GM12878 (cell line): ENCODE measurements at regions of chr1 and their contacts with region 1.

Region 1: DNA sequence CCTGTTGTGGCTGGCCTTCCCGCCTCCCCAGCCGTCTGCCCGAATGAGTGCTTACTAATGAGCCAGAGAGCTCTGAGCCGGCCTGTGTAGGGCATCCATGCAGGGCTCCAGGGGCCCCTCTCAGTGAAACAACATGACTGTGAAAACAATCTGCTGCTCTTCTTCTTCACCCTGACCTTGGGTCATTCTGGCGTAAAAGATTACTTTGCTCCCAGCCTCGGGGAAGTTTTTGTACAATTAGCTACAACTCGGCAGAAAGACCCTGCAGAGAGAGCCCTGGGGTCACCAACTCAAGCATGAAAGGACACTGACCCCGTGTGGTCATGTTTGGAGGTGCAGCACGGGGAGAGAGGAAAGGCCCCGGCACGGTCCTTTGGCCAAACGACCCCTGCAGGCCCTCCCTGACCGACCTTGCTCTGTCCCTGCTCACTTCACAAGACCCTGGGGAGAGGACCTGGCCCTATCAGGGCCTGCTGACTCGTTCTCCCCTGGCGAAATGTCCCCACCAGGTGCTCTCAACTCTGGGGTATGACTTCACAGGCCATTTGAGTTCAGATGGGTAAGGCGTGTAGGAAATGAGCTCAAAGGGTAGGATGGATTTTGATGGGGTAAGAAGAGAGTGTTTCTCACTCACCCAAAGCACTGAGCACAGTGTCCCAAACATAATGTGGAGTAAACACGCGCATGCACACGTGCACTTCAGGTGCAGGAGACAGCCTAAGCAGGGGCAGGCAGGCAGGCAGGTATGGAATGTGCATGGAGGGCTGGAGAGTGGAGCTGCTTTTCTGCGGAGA is 22.9 kb upstream of the FAM20B start:
- DNase-seq: no peak
- ATAC-seq: peak; percentile 95
- H3K4me3 ChIP-seq: no peak overlapping the region
- H3K27ac ChIP-seq: no peak overlapping the region
- H3K4me1 ChIP-seq: no peaks in the 10 kb centered on the region
- H3K27me3 ChIP-seq: no peaks in the 10 kb centered on the region
- CTCF ChIP-seq: peak; percentile 95 to 97 (median 96); a peak in 5 of 6 replicates
- EP300 ChIP-seq: no peak
- POLR2A ChIP-seq: no peak
- RAD21 ChIP-seq: peak; percentile 98

Region 2: DNA sequence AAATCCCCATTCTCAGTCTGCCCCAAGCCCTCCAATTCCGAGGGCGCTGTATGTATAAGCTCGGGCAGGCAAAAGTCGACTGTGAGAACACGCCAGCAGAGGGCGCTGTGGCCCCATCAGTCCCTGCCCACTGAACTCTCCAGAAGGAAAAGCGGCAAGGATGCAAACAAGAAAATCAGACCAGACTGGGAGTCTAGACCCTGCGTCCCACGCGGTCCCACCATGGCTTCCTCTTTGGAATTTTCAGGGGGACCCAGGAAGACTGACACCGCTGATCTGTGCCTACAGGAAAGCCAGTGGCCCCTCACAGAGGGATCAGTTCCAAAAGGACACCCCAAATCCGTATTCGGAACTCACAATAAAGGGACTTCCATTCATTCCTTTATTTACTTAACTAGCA is 470.4 kb before region 1 on chr1:
- CTCF ChIA-PET with region 1: interaction called, 59 read pairs
- POLR2A ChIA-PET with region 1: no interaction called
- RAD21 ChIA-PET with region 1: interaction called, 39 read pairs
- SMC1A ChIA-PET with region 1: interaction called, 20 read pairs
- in situ Hi-C with region 1: loop called (anchors 5 kb)
- intact Hi-C with region 1: loop called (anchors 1 kb)
- DNase-seq: no peak
- ATAC-seq: peak; percentile 97
- H3K4me3 ChIP-seq: no peak overlapping the region
- H3K27ac ChIP-seq: no peak overlapping the region
- H3K4me1 ChIP-seq: no peaks in the 10 kb centered on the region
- H3K27me3 ChIP-seq: no peaks in the 10 kb centered on the region; a peak in 1 of 4 replicates
- CTCF ChIP-seq: peak; percentile 87 to 93 (median 89); a peak in 5 of 6 replicates
- EP300 ChIP-seq: no peak
- POLR2A ChIP-seq: no peak
- RAD21 ChIP-seq: peak; percentile 88

Region 3: DNA sequence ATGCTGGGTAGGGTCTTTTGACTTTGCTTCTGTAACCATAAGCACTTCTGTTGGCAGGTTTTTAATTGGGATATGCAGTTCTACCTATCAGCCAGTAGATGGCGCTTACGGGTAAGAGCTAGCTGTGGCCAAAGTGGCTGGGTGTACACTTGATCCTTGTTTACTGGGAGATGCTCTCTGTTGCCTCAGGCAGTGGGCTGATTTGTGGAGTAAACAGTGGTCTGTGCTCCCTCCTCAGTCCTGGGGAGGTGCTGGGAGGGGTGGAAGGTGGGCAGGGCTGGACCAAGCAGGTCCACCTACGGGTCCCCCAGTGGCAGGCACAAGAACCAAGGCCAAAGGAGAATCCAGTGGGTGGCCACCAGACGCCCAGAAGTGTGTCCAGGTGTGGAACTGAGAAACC is 234.3 kb before region 1 on chr1:
- CTCF ChIA-PET with region 1: interaction called, 64 read pairs
- POLR2A ChIA-PET with region 1: no interaction called
- RAD21 ChIA-PET with region 1: interaction called, 13 read pairs
- SMC1A ChIA-PET with region 1: interaction called, 34 read pairs
- in situ Hi-C with region 1: loop called (anchors 5 kb)
- intact Hi-C with region 1: no loop called
- DNase-seq: no peak
- ATAC-seq: peak; percentile 75
- H3K4me3 ChIP-seq: no peak overlapping the region
- H3K27ac ChIP-seq: no peak overlapping the region
- H3K4me1 ChIP-seq: no peaks in the 10 kb centered on the region
- H3K27me3 ChIP-seq: no peaks in the 10 kb centered on the region
- CTCF ChIP-seq: peak; percentile 75 to 81 (median 77)
- EP300 ChIP-seq: no peak
- POLR2A ChIP-seq: no peak
- RAD21 ChIP-seq: peak; percentile 64

Region 4: GRCh38 chr1:178784131-178784536 is 218.6 kb before region 1 on chr1:
- CTCF ChIA-PET with region 1: interaction called, 12 read pairs
- POLR2A ChIA-PET with region 1: no interaction called
- RAD21 ChIA-PET with region 1: interaction called, 7 read pairs
- SMC1A ChIA-PET with region 1: interaction called, 12 read pairs
- in situ Hi-C with region 1: no loop called
- intact Hi-C with region 1: no loop called
- DNase-seq: no peak
- ATAC-seq: no peak
- H3K4me3 ChIP-seq: no peak overlapping the region
- H3K27ac ChIP-seq: no peak overlapping the region
- H3K4me1 ChIP-seq: no peaks in the 10 kb centered on the region
- H3K27me3 ChIP-seq: no peaks in the 10 kb centered on the region
- CTCF ChIP-seq: no peak
- EP300 ChIP-seq: no peak
- POLR2A ChIP-seq: no peak
- RAD21 ChIP-seq: no peak

Region 5: GRCh38 chr1:178818416-178818815 is 184.3 kb before region 1 on chr1:
- CTCF ChIA-PET with region 1: interaction called, 14 read pairs
- POLR2A ChIA-PET with region 1: no interaction called
- RAD21 ChIA-PET with region 1: no interaction called
- SMC1A ChIA-PET with region 1: no interaction called
- in situ Hi-C with region 1: no loop called
- intact Hi-C with region 1: loop called (anchors 2 kb)
- DNase-seq: no peak
- ATAC-seq: no peak
- H3K4me3 ChIP-seq: no peak overlapping the region
- H3K27ac ChIP-seq: no peak overlapping the region
- H3K4me1 ChIP-seq: no peaks in the 10 kb centered on the region
- H3K27me3 ChIP-seq: no peaks in the 10 kb centered on the region
- CTCF ChIP-seq: no peak
- EP300 ChIP-seq: no peak
- POLR2A ChIP-seq: no peak
- RAD21 ChIP-seq: no peak

Region 6: DNA sequence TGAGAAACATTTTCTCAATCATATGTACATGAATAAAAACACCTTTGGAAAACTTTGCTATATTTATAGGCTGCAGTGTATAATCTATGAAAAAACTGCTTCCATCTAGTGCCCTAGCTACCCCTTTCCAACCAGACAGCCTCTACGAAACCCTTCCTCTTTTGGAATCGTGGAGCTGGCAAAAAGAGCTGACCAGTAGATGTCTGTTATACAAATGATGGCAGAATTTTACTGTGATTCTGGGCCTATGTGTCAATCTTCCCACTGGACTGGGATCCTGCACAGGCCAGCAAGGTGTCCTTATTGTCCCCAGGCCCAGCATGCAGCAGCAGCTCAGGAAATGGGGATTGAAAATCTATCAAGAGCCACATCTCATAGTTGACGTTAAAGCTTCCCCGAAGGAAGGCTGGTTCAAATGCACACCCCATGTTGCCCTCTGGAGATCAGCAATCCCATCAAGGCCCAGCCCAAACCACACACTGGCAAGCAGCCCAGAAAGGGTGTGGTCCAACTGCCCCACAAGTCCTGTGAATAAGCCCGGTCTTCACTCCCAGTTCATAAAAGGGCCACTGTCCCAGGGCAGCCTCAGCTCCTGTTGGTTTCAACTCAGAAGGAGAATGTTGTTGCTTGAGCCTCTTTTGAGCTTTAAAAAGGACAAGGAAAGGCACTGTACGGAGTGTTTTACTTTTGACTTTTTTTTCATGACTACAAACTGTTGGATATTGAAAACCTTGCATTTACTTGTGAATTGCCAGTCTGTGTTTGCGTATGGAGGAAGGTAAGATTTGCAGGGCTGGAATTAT is 14.2 kb after region 1 on chr1:
- CTCF ChIA-PET with region 1: interaction called, 15 read pairs
- POLR2A ChIA-PET with region 1: no interaction called
- RAD21 ChIA-PET with region 1: no interaction called
- SMC1A ChIA-PET with region 1: interaction called, 5 read pairs
- in situ Hi-C with region 1: no loop called
- intact Hi-C with region 1: no loop called
- DNase-seq: no peak
- ATAC-seq: no peak
- H3K4me3 ChIP-seq: no peak overlapping the region
- H3K27ac ChIP-seq: no peak overlapping the region
- H3K4me1 ChIP-seq: no peaks in the 10 kb centered on the region
- H3K27me3 ChIP-seq: peaks cover 0 to 3% of the 10 kb centered on the region in 2 experiments; a peak in 2 of 4 replicates
- CTCF ChIP-seq: no peak
- EP300 ChIP-seq: no peak
- POLR2A ChIP-seq: no peak
- RAD21 ChIP-seq: no peak

Region 7: GRCh38 chr1:179142889-179143299 is 140.1 kb after region 1 on chr1:
- CTCF ChIA-PET with region 1: no interaction called
- POLR2A ChIA-PET with region 1: no interaction called
- RAD21 ChIA-PET with region 1: no interaction called
- SMC1A ChIA-PET with region 1: no interaction called
- in situ Hi-C with region 1: no loop called
- intact Hi-C with region 1: no loop called
- DNase-seq: no peak
- ATAC-seq: peak; percentile 42
- H3K4me3 ChIP-seq: no peak overlapping the region
- H3K27ac ChIP-seq: no peak overlapping the region
- H3K4me1 ChIP-seq: no peaks in the 10 kb centered on the region; the same call in 1 of the 2 replicates
- H3K27me3 ChIP-seq: no peaks in the 10 kb centered on the region
- CTCF ChIP-seq: no peak
- EP300 ChIP-seq: no peak
- POLR2A ChIP-seq: no peak
- RAD21 ChIP-seq: no peak